ENCODE measurements at regions of chr1 and their contacts with region 1.

Region 1: GRCh38 chr1:235494531-235494930 is 9.7 kb downstream of the B3GALNT2 start:
- DNase-seq: no peak

Region 2: DNA sequence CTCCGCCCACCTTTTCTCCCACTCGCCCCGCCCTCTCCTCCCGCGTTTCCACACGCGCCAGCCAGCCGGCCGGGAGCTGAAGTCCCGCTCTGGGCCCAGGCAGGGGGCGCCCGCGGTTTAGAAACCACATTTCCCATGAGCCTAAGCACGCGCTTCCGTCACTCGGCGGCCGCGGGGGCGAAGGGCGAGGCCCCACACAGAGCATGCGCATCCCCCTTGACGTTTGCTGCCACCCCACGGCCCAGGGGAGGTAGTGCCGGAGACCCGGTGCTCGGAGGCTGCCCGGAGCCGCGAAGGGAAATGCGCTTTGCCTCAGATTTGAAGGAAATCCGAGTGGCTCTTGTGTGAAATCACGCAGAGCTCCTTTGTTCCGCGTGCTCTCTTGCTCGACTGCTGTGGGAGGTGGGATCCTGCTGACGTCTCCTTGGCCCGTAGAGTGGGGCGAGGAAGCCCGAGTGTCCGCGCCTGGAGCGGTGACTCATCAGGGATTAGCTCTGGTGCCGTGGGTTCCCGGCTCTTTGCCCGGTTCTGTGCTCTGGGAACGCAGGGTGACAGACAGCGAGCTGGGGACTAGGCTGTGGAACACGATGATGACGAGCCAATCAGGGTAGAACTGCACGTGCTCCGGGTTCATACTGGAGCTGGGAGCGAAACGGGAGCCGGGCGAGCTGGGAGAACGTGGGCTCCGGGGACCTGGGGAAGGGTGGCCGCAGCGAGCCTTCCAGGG is 10.1 kb after region 1 on chr1:
- CTCF ChIA-PET with region 1: no interaction called
- POLR2A ChIA-PET with region 1: interaction called, 14 read pairs
- DNase-seq: peak; percentile 99

Measured in HEK293T (cell line).